ENCODE measurements at regions of chr7 and their contacts with region 1.

Region 1: GRCh38 chr7:44797329-44798251 is 1.1 kb downstream of the PPIA start:
- DNase-seq: peak; percentile 80 to 90
- ATAC-seq: peak; percentile 60 to 80 (median 70)
- H3K4me3 ChIP-seq: peak overlapping the region; percentile 99
- H3K4me3 Mint-ChIP-seq: peak overlapping the region; percentile 94
- H3K27ac ChIP-seq: peak overlapping the region; percentile 99
- H3K27ac Mint-ChIP-seq: peak overlapping the region; percentile 95 to 96
- H3K4me1 ChIP-seq: peaks cover 21% of the 10 kb centered on the region
- H3K4me1 Mint-ChIP-seq: peaks cover 27% of the 10 kb centered on the region in 2 donors
- H3K27me3 ChIP-seq: no peaks in the 10 kb centered on the region
- H3K27me3 Mint-ChIP-seq: no peaks in the 10 kb centered on the region
- CTCF ChIP-seq: peak; percentile 24

Region 2: GRCh38 chr7:44581879-44582603 is 215.5 kb before region 1 on chr7 and contains the start of gene TMED4:
- intact Hi-C with region 1: loop called (anchors 1 kb)
- DNase-seq: peak; percentile 100
- ATAC-seq: peak; percentile 87 to 97 (median 87)
- H3K4me3 ChIP-seq: peak within 1 kb of the TSS; percentile 75
- H3K4me3 Mint-ChIP-seq: peak within 1 kb of the TSS; percentile 91
- H3K27ac ChIP-seq: peak within 1 kb of the TSS; percentile 95
- H3K27ac Mint-ChIP-seq: peak within 1 kb of the TSS; percentile 97 to 98
- H3K4me1 ChIP-seq: peaks cover 23% of the 10 kb centered on the region
- H3K4me1 Mint-ChIP-seq: peaks cover 30 to 31% of the 10 kb centered on the region in 2 donors
- H3K27me3 ChIP-seq: no peaks in the 10 kb centered on the region
- H3K27me3 Mint-ChIP-seq: no peaks in the 10 kb centered on the region
- CTCF ChIP-seq: no peak
- total RNA-seq, gene TMED4: 93.1 to 101 (median 94.1) TPM

Region 3: GRCh38 chr7:44638611-44639557 is 158.7 kb before region 1 on chr7:
- intact Hi-C with region 1: loop called (anchors 2 kb)
- DNase-seq: peak; percentile 72 to 87
- ATAC-seq: peak; percentile 79 to 91 (median 85)
- H3K4me3 ChIP-seq: no peak overlapping the region
- H3K4me3 Mint-ChIP-seq: peak overlapping the region; percentile 90
- H3K27ac ChIP-seq: peak overlapping the region; percentile 97
- H3K27ac Mint-ChIP-seq: peak overlapping the region; percentile 94 to 96
- H3K4me1 ChIP-seq: peaks cover 68% of the 10 kb centered on the region
- H3K4me1 Mint-ChIP-seq: peaks cover 65% of the 10 kb centered on the region in 2 donors
- H3K27me3 ChIP-seq: no peaks in the 10 kb centered on the region
- H3K27me3 Mint-ChIP-seq: no peaks in the 10 kb centered on the region
- CTCF ChIP-seq: no peak

Region 4: GRCh38 chr7:44748045-44748947 is 49.3 kb before region 1 on chr7 and contains the start of gene ZMIZ2:
- intact Hi-C with region 1: loop called (anchors 1 kb)
- DNase-seq: peak; percentile 93 to 94
- ATAC-seq: peak; percentile 89 to 97 (median 93)
- H3K4me3 ChIP-seq: peak within 1 kb of the TSS; percentile 78
- H3K4me3 Mint-ChIP-seq: peak within 1 kb of the TSS; percentile 94
- H3K27ac ChIP-seq: peak within 1 kb of the TSS; percentile 77
- H3K27ac Mint-ChIP-seq: peak within 1 kb of the TSS; percentile 85 to 96
- H3K4me1 ChIP-seq: peaks cover 31% of the 10 kb centered on the region
- H3K4me1 Mint-ChIP-seq: peaks cover 37 to 48% of the 10 kb centered on the region in 2 donors
- H3K27me3 ChIP-seq: no peaks in the 10 kb centered on the region
- H3K27me3 Mint-ChIP-seq: no peaks in the 10 kb centered on the region
- CTCF ChIP-seq: no peak
- total RNA-seq, gene ZMIZ2: 152 to 170 (median 167) TPM

Region 5: GRCh38 chr7:44769776-44770662 is 27.6 kb before region 1 on chr7:
- intact Hi-C with region 1: loop called (anchors 2 kb)
- DNase-seq: peak; percentile 52 to 69
- ATAC-seq: peak; percentile 74 to 89 (median 87)
- H3K4me3 ChIP-seq: no peak overlapping the region
- H3K4me3 Mint-ChIP-seq: peak overlapping the region; percentile 84
- H3K27ac ChIP-seq: peak overlapping the region; percentile 51
- H3K27ac Mint-ChIP-seq: peak overlapping the region; percentile 78 to 93
- H3K4me1 ChIP-seq: peaks cover 46% of the 10 kb centered on the region
- H3K4me1 Mint-ChIP-seq: peaks cover 40 to 43% of the 10 kb centered on the region in 2 donors
- H3K27me3 ChIP-seq: no peaks in the 10 kb centered on the region
- H3K27me3 Mint-ChIP-seq: peaks cover under 1 to 2% of the 10 kb centered on the region in 2 donors
- CTCF ChIP-seq: no peak

Region 6: DNA sequence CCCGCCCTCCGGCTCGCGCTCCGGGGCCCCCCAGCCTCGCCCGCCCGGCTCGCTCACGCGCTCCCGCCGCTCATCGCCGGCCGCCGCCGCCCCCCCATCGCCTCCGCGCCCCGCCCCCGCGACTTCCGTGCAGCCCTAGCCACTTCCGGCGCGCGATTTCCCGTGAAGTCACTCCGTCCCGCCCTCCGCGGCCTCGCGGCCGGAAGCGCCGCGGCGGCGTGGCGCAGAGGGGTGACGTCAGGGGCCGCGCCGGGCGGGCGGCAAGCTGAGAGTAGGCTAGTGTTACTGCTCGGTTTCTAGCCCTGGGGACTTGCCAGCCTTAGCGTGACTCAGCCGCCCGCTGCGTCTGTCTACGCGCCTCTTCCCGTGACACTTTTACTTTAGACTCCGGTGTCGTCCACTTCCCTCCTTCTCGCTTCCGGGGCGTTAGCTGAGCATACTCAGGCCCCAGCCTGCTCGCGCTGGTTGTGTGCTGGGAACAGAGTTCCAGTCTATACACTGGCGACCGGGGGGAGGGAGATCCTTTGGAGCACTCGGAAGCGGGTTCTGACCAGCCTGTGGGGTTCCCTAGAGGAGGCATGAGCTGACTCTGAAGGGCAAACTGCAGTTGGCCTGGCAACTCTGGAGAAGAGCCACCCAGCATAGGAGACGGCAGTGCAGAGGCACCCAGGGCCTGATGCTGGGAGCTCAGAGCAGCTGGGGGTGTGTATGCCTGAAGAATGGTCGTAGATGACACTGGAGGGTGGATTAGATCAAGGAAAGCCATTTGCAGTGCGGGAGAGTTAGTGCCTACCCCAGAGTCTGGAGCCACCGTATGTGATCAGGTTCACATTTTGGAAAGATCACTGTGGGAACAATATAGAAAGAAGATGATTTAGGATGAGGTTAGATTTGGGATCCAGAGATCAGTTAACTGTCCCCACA is 88.1 kb after region 1 on chr7 and contains the start of gene PURB:
- intact Hi-C with region 1: loop called (anchors 1 kb)
- DNase-seq: peak; percentile 98 to 99
- ATAC-seq: peak; percentile 83 to 94 (median 86)
- H3K4me3 ChIP-seq: peak within 1 kb of the TSS; percentile 75
- H3K4me3 Mint-ChIP-seq: peak within 1 kb of the TSS; percentile 99
- H3K27ac ChIP-seq: peak within 1 kb of the TSS; percentile 97
- H3K27ac Mint-ChIP-seq: peak within 1 kb of the TSS; percentile 100
- H3K4me1 ChIP-seq: peaks cover 35% of the 10 kb centered on the region
- H3K4me1 Mint-ChIP-seq: peaks cover 34 to 45% of the 10 kb centered on the region in 2 donors
- H3K27me3 ChIP-seq: no peaks in the 10 kb centered on the region
- H3K27me3 Mint-ChIP-seq: no peaks in the 10 kb centered on the region
- CTCF ChIP-seq: no peak
- total RNA-seq, gene PURB: 28.5 to 36.0 (median 33.7) TPM

Region 7: DNA sequence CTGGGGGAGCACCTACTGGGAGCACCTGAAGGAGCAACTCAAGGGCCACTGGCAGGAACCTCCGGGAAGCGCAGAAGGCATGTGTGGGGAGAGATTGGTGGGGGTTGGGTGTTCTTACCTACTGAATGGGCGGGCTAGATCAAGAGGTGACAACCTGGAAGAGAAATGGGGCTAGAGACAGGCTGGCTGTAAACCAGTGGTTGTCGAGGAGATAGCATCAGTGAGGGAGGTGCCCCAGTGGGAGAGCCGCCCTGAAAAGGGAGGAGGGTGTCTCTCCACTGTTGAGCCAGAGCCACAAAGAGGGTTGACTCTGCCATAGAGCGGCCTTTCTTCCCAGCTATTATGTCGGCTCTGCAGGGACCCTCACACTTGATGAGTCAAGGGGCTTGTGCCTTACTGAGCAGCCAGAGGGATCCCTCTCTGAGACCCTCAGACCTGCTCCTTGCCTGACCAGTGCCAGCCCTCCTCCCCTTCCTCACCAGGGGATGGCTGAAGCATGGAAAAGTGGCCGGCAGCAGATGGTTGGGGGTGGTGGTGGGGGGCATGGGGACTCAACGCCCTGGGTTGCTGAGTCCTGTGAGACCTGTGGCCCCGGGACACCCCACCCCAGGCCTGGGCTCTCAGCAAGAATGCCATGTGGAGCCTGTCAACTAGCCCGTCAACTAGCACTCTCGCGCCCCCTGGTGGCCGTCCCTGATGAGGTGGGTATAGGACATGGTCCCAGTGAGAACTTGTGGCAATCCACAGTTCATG is 124.2 kb after region 1 on chr7:
- intact Hi-C with region 1: loop called (anchors 1 kb)
- DNase-seq: peak; percentile 94
- ATAC-seq: peak; percentile 94 to 99 (median 99)
- H3K4me3 ChIP-seq: no peak overlapping the region
- H3K4me3 Mint-ChIP-seq: no peak overlapping the region
- H3K27ac ChIP-seq: no peak overlapping the region
- H3K27ac Mint-ChIP-seq: peak overlapping the region in 1 of 2 donors; percentile 74
- H3K4me1 ChIP-seq: peaks cover 5% of the 10 kb centered on the region
- H3K4me1 Mint-ChIP-seq: peaks cover 0 to 4% of the 10 kb centered on the region in 2 donors
- H3K27me3 ChIP-seq: no peaks in the 10 kb centered on the region
- H3K27me3 Mint-ChIP-seq: peaks cover 0 to 7% of the 10 kb centered on the region in 2 donors
- CTCF ChIP-seq: peak; percentile 87